ENCODE measurements at regions of chr6 and their contacts with region 1.

Region 1: GRCh38 chr6:41964201-41964887 is 22.7 kb upstream of the CCND3 start:
- DNase-seq: peak; percentile 59
- ATAC-seq: peak; percentile 48
- H3K4me3 Mint-ChIP-seq: no peak overlapping the region
- H3K27ac Mint-ChIP-seq: peak overlapping the region; percentile 86
- H3K4me1 Mint-ChIP-seq: peaks cover 95% of the 10 kb centered on the region
- H3K27me3 Mint-ChIP-seq: no peaks in the 10 kb centered on the region

Region 2: DNA sequence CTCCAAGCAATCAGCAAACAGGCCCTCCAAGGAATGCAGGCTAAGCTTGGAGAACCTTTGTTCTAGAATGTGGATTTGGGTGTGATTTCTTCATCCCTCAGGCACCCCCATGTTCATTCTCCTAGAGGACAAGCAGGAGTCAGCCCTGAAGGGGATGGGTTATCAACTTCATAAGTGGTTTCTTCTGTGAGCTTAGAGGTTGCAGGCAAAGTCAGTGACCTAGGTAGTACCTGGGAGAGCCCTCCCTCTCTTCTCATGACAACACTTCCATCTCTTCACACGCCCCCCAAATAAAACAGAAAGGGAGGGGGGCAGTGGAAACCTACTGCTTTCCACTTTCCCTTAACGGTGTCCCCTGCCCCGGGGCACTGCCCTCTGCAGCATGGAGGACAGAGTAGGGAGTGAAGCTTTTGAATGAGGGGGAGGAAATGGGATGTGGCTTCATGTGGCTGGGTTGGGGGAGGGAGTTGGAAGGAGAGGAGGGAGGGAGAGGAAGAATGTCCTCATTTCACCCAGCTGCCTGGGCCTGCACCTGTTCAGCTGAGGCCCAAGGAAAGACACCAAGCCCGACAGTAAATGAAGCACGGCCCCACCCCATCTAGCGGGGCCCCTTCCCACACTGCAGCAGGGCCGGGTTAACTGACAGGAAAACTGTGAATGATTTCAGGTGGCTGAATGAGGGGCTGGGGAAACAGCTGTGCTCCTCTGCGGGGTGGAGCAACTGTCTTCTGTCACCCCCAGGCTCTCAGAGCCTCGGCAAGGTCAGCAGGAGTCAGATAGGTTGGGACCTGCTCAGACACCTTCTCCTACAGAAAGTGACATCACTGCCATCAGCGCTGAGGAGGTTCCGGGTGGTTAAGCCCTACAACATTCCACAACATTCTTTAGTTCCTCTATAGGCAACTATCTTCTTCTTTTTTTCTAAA is 45.9 kb after region 1 on chr6:
- CTCF ChIA-PET with region 1: interaction called, 8 read pairs
- POLR2A ChIA-PET with region 1: no interaction called
- intact Hi-C with region 1: loop called in 1 of 2 experiments (anchors 5 kb)
- DNase-seq: peak; percentile 71
- ATAC-seq: peak; percentile 71
- H3K4me3 Mint-ChIP-seq: peak overlapping the region; percentile 66
- H3K27ac Mint-ChIP-seq: peak overlapping the region; percentile 98
- H3K4me1 Mint-ChIP-seq: peaks cover 76% of the 10 kb centered on the region
- H3K27me3 Mint-ChIP-seq: no peaks in the 10 kb centered on the region